Activated naive CD4-positive, alpha-beta T cell treated with anti-CD3 and anti-CD28 coated beads for 36 hours (primary cell): ENCODE measurements at regions of chr6 and their contacts with region 1.

Region 1: GRCh38 chr6:129510950-129511349 is 199.0 kb downstream of the ARHGAP18 start:
- DNase-seq: no peak
- H3K4me3 Mint-ChIP-seq: no peak overlapping the region
- H3K27ac Mint-ChIP-seq: no peak overlapping the region
- H3K4me1 Mint-ChIP-seq: no peaks in the 10 kb centered on the region
- H3K27me3 Mint-ChIP-seq: no peaks in the 10 kb centered on the region

Region 2: GRCh38 chr6:129546702-129547101 is 35.8 kb after region 1 on chr6:
- CTCF ChIA-PET with region 1: no interaction called
- intact Hi-C with region 1: loop called (anchors 5 kb)
- DNase-seq: no peak
- H3K4me3 Mint-ChIP-seq: no peak overlapping the region
- H3K27ac Mint-ChIP-seq: no peak overlapping the region
- H3K4me1 Mint-ChIP-seq: peaks cover 3% of the 10 kb centered on the region
- H3K27me3 Mint-ChIP-seq: no peaks in the 10 kb centered on the region

Region 3: GRCh38 chr6:129621247-129621646 is 110.3 kb after region 1 on chr6:
- CTCF ChIA-PET with region 1: no interaction called
- intact Hi-C with region 1: no loop called
- DNase-seq: peak; percentile 54
- H3K4me3 Mint-ChIP-seq: no peak overlapping the region
- H3K27ac Mint-ChIP-seq: no peak overlapping the region
- H3K4me1 Mint-ChIP-seq: no peaks in the 10 kb centered on the region
- H3K27me3 Mint-ChIP-seq: no peaks in the 10 kb centered on the region

Region 4: DNA sequence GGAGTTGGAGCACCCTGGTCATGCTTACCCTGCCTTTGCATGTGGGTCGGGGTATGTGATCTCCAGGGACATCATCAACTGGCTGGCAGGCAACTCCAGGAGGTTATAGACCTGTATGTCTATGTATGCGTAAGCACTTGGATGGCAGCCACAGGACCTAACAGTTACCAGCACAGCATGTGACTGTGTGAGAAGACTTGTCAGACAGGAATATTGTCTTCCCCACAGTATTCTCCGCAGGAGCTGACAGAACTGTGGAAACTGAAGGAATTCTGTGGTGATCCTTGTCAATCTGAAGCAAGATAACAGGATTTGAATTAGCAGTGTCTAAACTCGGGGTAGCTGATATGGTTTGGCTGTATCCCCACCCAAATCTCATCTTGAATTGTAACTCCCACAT is 291.0 kb after region 1 on chr6:
- CTCF ChIA-PET with region 1: no interaction called
- intact Hi-C with region 1: no loop called
- DNase-seq: no peak
- H3K4me3 Mint-ChIP-seq: no peak overlapping the region
- H3K27ac Mint-ChIP-seq: no peak overlapping the region
- H3K4me1 Mint-ChIP-seq: no peaks in the 10 kb centered on the region
- H3K27me3 Mint-ChIP-seq: peaks cover 8% of the 10 kb centered on the region